AG04449 (cell line): ENCODE measurements at regions of chr14 and their contacts with region 1.

Region 1: DNA sequence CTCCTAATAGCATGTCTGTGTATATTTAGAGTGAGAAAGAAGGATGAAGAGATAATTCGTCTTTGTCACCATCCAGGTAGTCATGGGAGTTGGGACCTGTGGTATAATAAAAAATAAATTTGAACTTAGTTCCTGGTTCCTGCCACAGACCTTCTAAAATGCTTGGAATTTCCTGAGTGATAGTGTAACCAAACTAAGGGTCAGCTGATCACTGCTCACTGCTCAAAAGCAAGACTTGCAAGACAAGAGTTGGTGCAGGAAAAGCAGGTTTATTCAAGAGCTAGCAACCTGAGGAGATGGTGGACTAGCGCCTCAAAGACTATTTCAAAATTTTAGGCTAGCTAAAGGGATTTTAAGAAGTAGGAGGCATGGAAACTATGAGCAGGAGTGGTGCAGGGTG is 19.1 kb downstream of the ANG start:
- DNase-seq: no peak
- H3K4me3 ChIP-seq: no peak overlapping the region
- CTCF ChIP-seq: no peak

Region 2: GRCh38 chr14:20690848-20691523 is 16.6 kb before region 1 on chr14:
- CTCF ChIA-PET with region 1: interaction called, 12 read pairs
- POLR2A ChIA-PET with region 1: no interaction called
- DNase-seq: no peak
- H3K4me3 ChIP-seq: no peak overlapping the region
- CTCF ChIP-seq: peak; percentile 76